ENCODE measurements at regions of chr20 and their contacts with region 1.

Region 1: DNA sequence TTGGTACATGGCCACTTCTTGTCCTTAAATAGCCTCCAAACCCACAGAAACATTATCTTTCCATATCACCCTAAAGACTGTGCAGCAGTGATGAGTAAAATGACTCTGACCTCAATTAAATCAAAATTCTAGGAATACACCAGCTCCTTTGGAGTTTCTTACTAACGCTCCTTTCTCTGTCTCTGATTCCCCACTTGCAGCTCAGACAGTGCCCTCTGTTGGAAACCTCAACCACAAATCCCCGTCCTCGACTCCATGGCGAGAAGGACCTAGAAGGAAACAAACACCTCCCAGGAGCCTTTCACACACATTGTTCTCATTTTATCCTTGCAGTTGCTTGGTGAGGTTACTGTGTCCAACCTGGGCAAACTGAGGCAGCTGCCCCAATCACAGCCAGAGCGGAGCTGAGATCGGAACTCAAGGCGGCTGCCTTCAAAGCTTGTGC is 17.7 kb upstream of the PARD6B start:
- DNase-seq: no peak
- H3K4me3 ChIP-seq: no peak overlapping the region
- H3K27me3 ChIP-seq: peaks cover 2% of the 10 kb centered on the region; the same call in 1 of the 2 replicates
- CTCF ChIP-seq: peak; percentile 70

Region 2: GRCh38 chr20:50625986-50626677 is 87.5 kb before region 1 on chr20:
- CTCF ChIA-PET with region 1: interaction called, 31 read pairs
- POLR2A ChIA-PET with region 1: no interaction called
- DNase-seq: no peak
- H3K4me3 ChIP-seq: no peak overlapping the region
- H3K27me3 ChIP-seq: no peaks in the 10 kb centered on the region
- CTCF ChIP-seq: peak; percentile 82

Region 3: GRCh38 chr20:50635667-50636503 is 77.8 kb before region 1 on chr20:
- CTCF ChIA-PET with region 1: interaction called, 10 read pairs
- POLR2A ChIA-PET with region 1: no interaction called
- DNase-seq: no peak
- H3K4me3 ChIP-seq: no peak overlapping the region
- H3K27me3 ChIP-seq: peaks cover 4% of the 10 kb centered on the region
- CTCF ChIP-seq: peak; percentile 92

Region 4: DNA sequence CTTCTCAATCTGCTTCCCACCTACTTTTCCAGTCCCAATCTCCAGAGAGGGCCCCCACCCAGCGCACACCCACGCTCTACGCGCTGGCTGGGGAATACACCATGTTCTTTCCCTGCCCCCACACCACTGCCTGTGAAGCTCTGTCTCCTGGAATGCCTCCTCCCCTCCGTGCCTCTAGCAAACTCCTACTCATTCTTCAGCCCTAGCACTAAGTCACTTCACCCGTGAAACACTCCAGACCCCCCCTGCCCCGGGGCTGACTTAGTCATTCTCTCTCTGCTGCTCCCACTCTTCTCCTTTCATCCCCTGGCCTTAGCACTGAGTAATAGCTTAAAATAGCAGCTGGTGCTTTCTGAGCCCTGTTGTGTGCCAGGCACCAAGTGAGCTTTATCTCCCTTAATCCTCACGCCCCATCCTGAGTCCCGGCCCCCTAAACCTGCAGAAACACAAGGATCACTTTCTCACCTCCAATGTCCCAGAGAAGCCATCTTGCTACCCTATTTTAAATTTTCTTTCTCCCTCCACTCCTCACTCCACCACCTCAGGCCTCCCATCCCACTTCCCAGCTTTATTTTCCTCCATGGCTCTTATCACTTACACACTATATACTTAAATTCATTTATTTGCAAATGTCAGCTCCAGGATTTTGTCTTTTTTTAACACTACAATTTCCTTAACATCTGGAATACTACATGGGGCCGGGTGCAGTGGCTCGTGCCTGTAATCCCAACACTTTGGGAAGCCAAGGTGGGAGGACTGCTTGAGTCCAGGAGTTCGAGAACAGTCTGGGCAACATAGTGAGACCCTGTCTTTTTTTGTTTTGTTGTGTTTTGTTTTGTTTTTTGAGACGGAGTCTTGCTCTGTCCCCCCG is 11.4 kb after region 1 on chr20:
- CTCF ChIA-PET with region 1: interaction called, 15 read pairs
- POLR2A ChIA-PET with region 1: no interaction called
- DNase-seq: peak; percentile 95
- H3K4me3 ChIP-seq: no peak overlapping the region
- H3K27me3 ChIP-seq: no peaks in the 10 kb centered on the region
- CTCF ChIP-seq: no peak

Measured in BJ (cell line).